ENCODE measurements at regions of chr3 and their contacts with region 1.

Region 1: GRCh38 chr3:98732286-98733052 is 30.7 kb upstream of the ST3GAL6 start:
- DNase-seq: peak in 1 of 2 donors; percentile 67
- H3K4me3 ChIP-seq: peak overlapping the region; percentile 74 to 89
- H3K27ac ChIP-seq: peak overlapping the region; percentile 86 to 94
- H3K4me1 ChIP-seq: no peaks in the 10 kb centered on the region
- H3K27me3 ChIP-seq: no peaks in the 10 kb centered on the region
- CTCF ChIP-seq: peak in 1 of 3 experiments; percentile 2

Region 2: GRCh38 chr3:98750276-98750919 is 17.9 kb after region 1 on chr3:
- intact Hi-C with region 1: no loop called
- DNase-seq: no peak
- H3K4me3 ChIP-seq: no peak overlapping the region
- H3K27ac ChIP-seq: no peak overlapping the region
- H3K4me1 ChIP-seq: peaks cover 0 to 12% of the 10 kb centered on the region in 2 donors
- H3K27me3 ChIP-seq: no peaks in the 10 kb centered on the region
- CTCF ChIP-seq: no peak

Region 3: DNA sequence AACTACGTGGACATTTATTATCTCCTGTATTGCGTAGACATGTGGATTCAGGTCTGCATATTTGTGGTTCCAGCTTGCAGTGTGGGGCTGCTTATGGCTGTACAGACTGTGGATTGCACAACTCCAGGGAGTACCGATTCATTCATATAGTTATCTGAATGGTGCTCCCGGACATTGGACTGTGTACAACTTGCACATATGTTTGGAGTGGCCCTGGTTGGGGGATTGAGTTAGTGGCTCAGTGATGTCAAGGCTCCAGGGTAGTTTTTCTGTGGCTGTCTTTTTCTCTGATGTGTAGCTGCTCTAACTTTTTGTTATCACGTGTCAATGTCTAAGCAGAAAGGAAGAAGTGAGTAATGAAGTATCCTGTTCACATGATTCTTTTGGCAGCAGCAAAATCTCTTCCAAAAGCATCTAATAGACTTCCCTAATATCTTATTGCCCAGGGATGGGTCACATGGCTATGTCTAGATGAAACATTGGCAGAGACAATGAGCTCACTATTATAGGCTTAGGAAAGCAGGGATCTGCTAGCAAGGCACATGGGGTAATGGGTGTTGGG is 46.5 kb after region 1 on chr3:
- intact Hi-C with region 1: loop called (anchors 2 kb)
- DNase-seq: no peak
- H3K4me3 ChIP-seq: no peak overlapping the region
- H3K27ac ChIP-seq: peak overlapping the region; percentile 76 to 77
- H3K4me1 ChIP-seq: peaks cover 13 to 60% of the 10 kb centered on the region in 2 donors
- H3K27me3 ChIP-seq: no peaks in the 10 kb centered on the region
- CTCF ChIP-seq: no peak

Region 4: DNA sequence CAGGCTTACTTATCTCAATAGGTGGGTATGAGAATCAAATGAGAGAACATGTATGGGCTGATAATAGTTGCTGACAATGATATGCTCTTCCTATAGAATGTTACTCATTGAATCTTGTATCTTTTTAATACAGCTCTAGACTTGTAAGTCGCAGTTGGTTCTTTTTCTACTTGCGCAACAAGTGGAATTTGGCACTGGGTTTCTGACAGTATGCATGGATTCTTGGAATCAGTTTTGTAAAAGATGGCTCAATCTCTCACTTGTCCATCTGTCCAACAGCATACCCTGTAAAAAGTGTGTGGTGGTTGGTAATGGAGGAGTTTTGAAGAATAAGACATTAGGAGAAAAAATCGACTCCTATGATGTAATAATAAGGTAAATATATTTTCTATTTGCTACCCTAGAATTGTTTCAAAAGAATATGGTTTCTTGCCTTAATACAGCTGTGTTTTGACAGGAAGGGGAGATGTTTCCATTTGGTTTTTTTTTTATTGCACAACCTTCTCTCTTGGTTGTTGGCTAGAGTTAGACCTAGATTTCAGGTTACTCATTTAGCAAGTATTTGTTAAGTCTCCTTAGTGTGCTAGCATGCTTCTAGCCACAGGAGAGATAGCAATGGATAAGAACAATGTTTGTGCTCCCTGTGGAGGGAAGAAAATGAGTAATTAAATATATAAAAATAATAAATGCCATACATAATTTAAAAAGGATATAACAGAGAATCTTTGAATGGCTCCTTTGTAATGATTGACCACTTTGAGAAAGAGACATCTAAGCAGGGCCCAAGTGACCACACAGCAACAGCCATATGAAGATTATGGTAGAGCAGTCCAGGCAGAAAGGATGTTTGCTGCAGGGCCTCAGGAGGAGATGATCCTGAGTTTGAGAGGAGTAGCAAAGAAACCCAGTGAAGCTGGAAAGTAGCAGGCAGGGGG is 52.5 kb after region 1 on chr3:
- intact Hi-C with region 1: loop called (anchors 2 kb)
- DNase-seq: no peak
- H3K4me3 ChIP-seq: no peak overlapping the region
- H3K27ac ChIP-seq: peak overlapping the region; percentile 67 to 79
- H3K4me1 ChIP-seq: peaks cover 4 to 49% of the 10 kb centered on the region in 2 donors
- H3K27me3 ChIP-seq: no peaks in the 10 kb centered on the region
- CTCF ChIP-seq: no peak

Measured in ascending aorta (tissue), 2 donors.